ENCODE measurements at regions of chr15 and their contacts with region 1.

Region 1: GRCh38 chr15:88904624-88905327 is 8.4 kb downstream of the MFGE8 start:
- DNase-seq: no peak
- H3K4me3 ChIP-seq: no peak overlapping the region
- H3K27ac ChIP-seq: peak overlapping the region in 3 of 4 donors; percentile 29 to 55 (median 36)
- H3K4me1 ChIP-seq: peaks cover 39 to 63% (median 55%) of the 10 kb centered on the region in 4 donors
- H3K27me3 ChIP-seq: no peaks in the 10 kb centered on the region
- CTCF ChIP-seq: peak in 2 of 3 experiments; percentile 98 to 99
- EP300 ChIP-seq: no peak
- POLR2A ChIP-seq: no peak

Region 2: GRCh38 chr15:88788816-88789215 is 116.0 kb before region 1 on chr15:
- intact Hi-C with region 1: no loop called
- DNase-seq: no peak
- H3K4me3 ChIP-seq: no peak overlapping the region
- H3K27ac ChIP-seq: no peak overlapping the region
- H3K4me1 ChIP-seq: no peaks in the 10 kb centered on the region
- H3K27me3 ChIP-seq: peaks cover 0 to 19% (median 0%) of the 10 kb centered on the region in 4 donors
- CTCF ChIP-seq: no peak
- EP300 ChIP-seq: no peak
- POLR2A ChIP-seq: no peak

Region 3: GRCh38 chr15:88865498-88866099 is 39.2 kb before region 1 on chr15:
- intact Hi-C with region 1: no loop called
- DNase-seq: no peak
- H3K4me3 ChIP-seq: no peak overlapping the region
- H3K27ac ChIP-seq: no peak overlapping the region
- H3K4me1 ChIP-seq: no peaks in the 10 kb centered on the region
- H3K27me3 ChIP-seq: peaks cover 0 to 8% (median 0%) of the 10 kb centered on the region in 4 donors
- CTCF ChIP-seq: no peak
- EP300 ChIP-seq: no peak
- POLR2A ChIP-seq: no peak

Region 4: GRCh38 chr15:89017370-89018066 is 112.7 kb after region 1 on chr15:
- intact Hi-C with region 1: loop called (anchors 2 kb)
- DNase-seq: peak; percentile 94
- H3K4me3 ChIP-seq: peak overlapping the region; percentile 26 to 46 (median 36)
- H3K27ac ChIP-seq: peak overlapping the region; percentile 82 to 92 (median 87)
- H3K4me1 ChIP-seq: peaks cover 42 to 65% (median 63%) of the 10 kb centered on the region in 4 donors
- H3K27me3 ChIP-seq: no peaks in the 10 kb centered on the region
- CTCF ChIP-seq: peak; percentile 76 to 80 (median 77)
- EP300 ChIP-seq: no peak
- POLR2A ChIP-seq: no peak